T-cell (primary cell): ENCODE measurements at regions of chr7 and their contacts with region 1.

Region 1: GRCh38 chr7:157061979-157062378 is 51.5 kb upstream of the MNX1 start:
- DNase-seq: no peak
- ATAC-seq: no peak
- H3K4me3 ChIP-seq: no peak overlapping the region
- H3K4me3 Mint-ChIP-seq: no peak overlapping the region
- H3K27ac ChIP-seq: no peak overlapping the region
- H3K27ac Mint-ChIP-seq: no peak overlapping the region
- H3K4me1 ChIP-seq: no peaks in the 10 kb centered on the region
- H3K4me1 Mint-ChIP-seq: no peaks in the 10 kb centered on the region
- H3K27me3 ChIP-seq: peaks cover 0 to 28% of the 10 kb centered on the region in 2 experiments
- H3K27me3 Mint-ChIP-seq: peaks cover 32 to 39% of the 10 kb centered on the region in 2 donors

Region 2: GRCh38 chr7:157032644-157033482 is 29.1 kb before region 1 on chr7:
- CTCF ChIA-PET with region 1: no interaction called
- POLR2A ChIA-PET with region 1: no interaction called
- DNase-seq: no peak
- ATAC-seq: no peak
- H3K4me3 ChIP-seq: no peak overlapping the region
- H3K4me3 Mint-ChIP-seq: no peak overlapping the region
- H3K27ac ChIP-seq: no peak overlapping the region
- H3K27ac Mint-ChIP-seq: no peak overlapping the region
- H3K4me1 ChIP-seq: no peaks in the 10 kb centered on the region
- H3K4me1 Mint-ChIP-seq: no peaks in the 10 kb centered on the region
- H3K27me3 ChIP-seq: peaks cover 3 to 45% of the 10 kb centered on the region in 2 experiments
- H3K27me3 Mint-ChIP-seq: peaks cover 47 to 55% of the 10 kb centered on the region in 2 donors

Region 3: GRCh38 chr7:157073335-157073734 is 11.4 kb after region 1 on chr7:
- CTCF ChIA-PET with region 1: interaction called, 3 to 15 read pairs
- POLR2A ChIA-PET with region 1: no interaction called
- DNase-seq: no peak
- ATAC-seq: no peak
- H3K4me3 ChIP-seq: no peak overlapping the region
- H3K4me3 Mint-ChIP-seq: no peak overlapping the region
- H3K27ac ChIP-seq: no peak overlapping the region
- H3K27ac Mint-ChIP-seq: no peak overlapping the region
- H3K4me1 ChIP-seq: peaks cover 0 to under 1% of the 10 kb centered on the region in 2 experiments
- H3K4me1 Mint-ChIP-seq: no peaks in the 10 kb centered on the region
- H3K27me3 ChIP-seq: peaks cover 0 to 41% of the 10 kb centered on the region in 2 experiments
- H3K27me3 Mint-ChIP-seq: peaks cover 49 to 56% of the 10 kb centered on the region in 2 donors

Region 4: GRCh38 chr7:157238087-157238486 is 176.1 kb after region 1 on chr7:
- CTCF ChIA-PET with region 1: no interaction called
- POLR2A ChIA-PET with region 1: no interaction called
- DNase-seq: no peak
- ATAC-seq: no peak
- H3K4me3 ChIP-seq: no peak overlapping the region
- H3K4me3 Mint-ChIP-seq: no peak overlapping the region
- H3K27ac ChIP-seq: no peak overlapping the region
- H3K27ac Mint-ChIP-seq: no peak overlapping the region
- H3K4me1 ChIP-seq: no peaks in the 10 kb centered on the region
- H3K4me1 Mint-ChIP-seq: no peaks in the 10 kb centered on the region
- H3K27me3 ChIP-seq: no peaks in the 10 kb centered on the region
- H3K27me3 Mint-ChIP-seq: no peaks in the 10 kb centered on the region